ENCODE measurements at regions of chr16 and their contacts with region 1.

Region 1: GRCh38 chr16:9027070-9027795 is 63.5 kb upstream of the USP7 start:
- DNase-seq: no peak
- H3K4me3 ChIP-seq: peak overlapping the region in 1 of 3 donors; percentile 22
- H3K27ac ChIP-seq: no peak overlapping the region
- H3K4me1 ChIP-seq: no peaks in the 10 kb centered on the region
- H3K27me3 ChIP-seq: no peaks in the 10 kb centered on the region
- CTCF ChIP-seq: no peak
- POLR2A ChIP-seq: no peak

Region 2: DNA sequence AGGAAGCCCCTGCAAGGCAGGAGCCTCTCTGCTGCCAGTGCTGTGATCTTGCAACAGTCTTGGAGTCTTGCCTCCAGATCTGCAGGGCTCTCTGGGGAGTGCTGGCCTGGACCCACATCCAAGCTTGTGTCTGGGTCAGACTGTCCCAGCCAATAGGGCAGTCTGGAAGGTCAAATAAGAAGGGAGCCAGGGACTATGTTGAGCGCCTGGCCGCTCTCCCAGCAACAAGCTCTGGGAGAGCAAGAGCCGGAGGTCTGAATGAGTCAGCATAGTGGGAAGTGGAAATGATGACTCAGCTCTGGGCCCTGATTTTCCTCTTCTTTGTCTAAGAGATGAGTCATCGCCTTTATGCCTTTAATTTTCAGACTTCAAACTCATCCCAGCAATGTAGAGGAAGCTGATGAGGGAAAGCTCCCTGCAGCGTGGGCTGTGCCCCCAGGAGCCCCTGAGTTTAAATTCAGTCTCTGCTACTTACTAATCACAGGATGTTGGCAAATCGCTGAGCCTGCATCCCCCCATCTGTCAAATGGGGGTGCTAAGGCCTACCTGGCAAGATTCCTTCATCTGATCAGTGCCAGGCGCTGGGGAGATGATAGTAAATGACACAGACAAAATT is 20.6 kb after region 1 on chr16:
- intact Hi-C with region 1: no loop called
- DNase-seq: peak; percentile 83 to 85
- H3K4me3 ChIP-seq: no peak overlapping the region
- H3K27ac ChIP-seq: peak overlapping the region; percentile 61 to 83
- H3K4me1 ChIP-seq: no peaks in the 10 kb centered on the region
- H3K27me3 ChIP-seq: no peaks in the 10 kb centered on the region
- CTCF ChIP-seq: no peak
- POLR2A ChIP-seq: no peak

Region 3: GRCh38 chr16:10314811-10315210 is 1287.6 kb after region 1 on chr16:
- intact Hi-C with region 1: loop called (anchors 10 kb)
- DNase-seq: no peak
- H3K4me3 ChIP-seq: no peak overlapping the region
- H3K27ac ChIP-seq: no peak overlapping the region
- H3K4me1 ChIP-seq: no peaks in the 10 kb centered on the region
- H3K27me3 ChIP-seq: no peaks in the 10 kb centered on the region
- CTCF ChIP-seq: no peak
- POLR2A ChIP-seq: no peak